Activated CD4-positive, alpha-beta T cell treated with anti-CD3 and anti-CD28 coated beads, Interleukin-2, amount 10 ng/mL, durations not matched to agents 24 days and 14 days (primary cell): ENCODE measurements at regions of chr2 and their contacts with region 1.

Region 1: GRCh38 chr2:223760838-223761502 is 76.4 kb downstream of the AP1S3 start:
- DNase-seq: peak; percentile 86
- H3K4me3 Mint-ChIP-seq: peak overlapping the region; percentile 48
- H3K27ac Mint-ChIP-seq: peak overlapping the region; percentile 78
- H3K4me1 Mint-ChIP-seq: peaks cover 25% of the 10 kb centered on the region
- H3K27me3 Mint-ChIP-seq: no peaks in the 10 kb centered on the region

Region 2: DNA sequence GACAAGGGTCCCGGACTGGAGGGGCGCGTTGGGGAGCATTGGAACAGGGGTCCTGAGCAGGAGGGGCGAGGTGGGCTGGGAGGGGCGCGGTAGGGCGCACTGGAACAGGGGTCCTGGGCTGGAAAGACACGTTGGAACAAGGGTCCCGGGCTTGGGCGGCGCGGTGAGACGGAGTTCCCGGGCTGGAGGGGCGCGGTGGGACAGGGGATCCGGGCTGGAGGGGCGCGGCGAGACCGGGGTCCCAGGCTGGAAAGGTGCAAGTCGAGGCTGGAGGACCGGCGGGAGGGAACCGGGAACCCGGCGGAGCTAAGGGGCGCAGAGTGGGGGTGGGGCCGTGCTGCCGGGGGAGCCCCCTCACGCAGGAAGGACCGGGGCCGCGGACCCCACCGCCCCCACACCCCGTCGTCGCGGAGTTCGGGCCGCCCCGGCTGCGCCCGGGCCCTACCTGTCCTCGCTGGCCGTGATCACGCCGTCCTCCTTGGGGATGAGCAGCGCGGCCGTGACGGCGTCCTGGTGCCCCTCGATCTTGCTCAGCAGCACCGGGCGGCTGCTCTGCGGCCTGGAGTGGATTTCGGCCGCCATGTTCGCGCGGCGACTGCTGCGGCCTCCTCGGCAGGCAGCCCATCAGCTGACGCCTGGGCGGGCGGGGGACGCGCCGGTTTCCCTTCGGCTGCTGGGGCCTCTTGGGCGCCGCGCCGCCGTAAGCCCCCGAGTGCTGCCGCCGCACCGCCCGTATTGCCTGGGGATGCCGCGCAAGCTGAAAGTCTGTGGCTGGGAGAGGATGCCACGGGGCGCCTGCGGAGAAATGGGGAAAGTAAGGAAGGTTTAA is 183.9 kb after region 1 on chr2 and contains the start of gene WDFY1:
- intact Hi-C with region 1: loop called (anchors 2 kb)
- DNase-seq: peak; percentile 94
- H3K4me3 Mint-ChIP-seq: peak within 1 kb of the TSS; percentile 91
- H3K27ac Mint-ChIP-seq: peak within 1 kb of the TSS; percentile 94
- H3K4me1 Mint-ChIP-seq: peaks cover 54% of the 10 kb centered on the region
- H3K27me3 Mint-ChIP-seq: no peaks in the 10 kb centered on the region
- total RNA-seq, gene WDFY1: 25.3 and 27.8 TPM in 2 replicates